Activated T-helper 2 cell treated with anti-CD3 and anti-CD28 coated beads, Interferon-gamma antibody, Interleukin-2, Interleukin-4, amounts not matched to agents 10 μg/mL and 5 μg/mL and 100 μg/mL, durations not matched to agents 14 hours and 24 hours and 36 hours (primary cell): ENCODE measurements at regions of chr19 and their contacts with region 1.

Region 1: GRCh38 chr19:49391581-49392399 is 3.7 kb downstream of the KASH5 start:
- DNase-seq: peak; percentile 65
- H3K4me3 Mint-ChIP-seq: no peak overlapping the region
- H3K27ac Mint-ChIP-seq: no peak overlapping the region
- H3K4me1 Mint-ChIP-seq: peaks cover 7% of the 10 kb centered on the region
- H3K27me3 Mint-ChIP-seq: peaks cover 5% of the 10 kb centered on the region

Region 2: GRCh38 chr19:49421039-49421877 is 29.5 kb after region 1 on chr19:
- intact Hi-C with region 1: no loop called
- DNase-seq: peak; percentile 48
- H3K4me3 Mint-ChIP-seq: peak overlapping the region; percentile 57
- H3K27ac Mint-ChIP-seq: no peak overlapping the region
- H3K4me1 Mint-ChIP-seq: peaks cover 22% of the 10 kb centered on the region
- H3K27me3 Mint-ChIP-seq: peaks cover 77% of the 10 kb centered on the region

Region 3: DNA sequence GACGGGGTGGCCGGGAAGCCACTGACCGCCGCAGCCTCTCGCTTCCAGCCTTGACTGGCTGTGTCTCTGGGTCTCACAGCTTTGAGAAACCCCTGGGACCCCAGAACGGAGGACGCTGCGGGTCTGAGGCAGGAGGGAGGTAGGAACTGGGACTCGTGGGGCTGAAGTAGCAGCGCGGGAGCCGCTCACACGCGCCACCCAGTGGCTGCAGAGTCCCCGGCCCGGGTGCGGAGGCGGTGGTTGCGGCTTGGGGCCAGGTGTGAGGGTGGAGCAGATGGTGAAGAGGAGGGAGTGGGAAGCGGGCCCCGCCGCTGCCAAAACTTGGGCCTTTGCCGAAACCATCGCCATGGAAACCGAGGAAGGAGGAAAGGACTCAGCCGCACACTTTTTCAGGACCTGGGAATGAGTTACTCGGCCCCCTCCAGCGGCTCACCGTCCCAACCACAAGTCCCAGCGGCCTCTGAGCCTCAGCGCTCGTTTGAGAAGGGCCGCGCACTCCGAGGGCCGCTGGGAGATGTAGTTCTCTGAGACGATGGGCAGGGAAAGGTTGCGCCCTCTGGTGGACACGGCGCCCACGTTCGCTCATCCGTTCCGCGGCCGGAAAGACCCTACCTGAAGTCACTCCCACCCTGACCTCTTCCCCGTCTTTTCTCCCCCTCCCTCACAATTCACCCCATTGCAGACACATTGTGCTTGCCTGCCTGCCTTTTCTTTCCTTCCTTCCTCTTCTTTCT is 51.7 kb after region 1 on chr19:
- intact Hi-C with region 1: loop called (anchors 1 kb)
- DNase-seq: peak; percentile 92
- H3K4me3 Mint-ChIP-seq: peak overlapping the region; percentile 78
- H3K27ac Mint-ChIP-seq: peak overlapping the region; percentile 82
- H3K4me1 Mint-ChIP-seq: peaks cover 33% of the 10 kb centered on the region
- H3K27me3 Mint-ChIP-seq: peaks cover 37% of the 10 kb centered on the region